ENCODE measurements at regions of chr1 and their contacts with region 1.

Region 1: DNA sequence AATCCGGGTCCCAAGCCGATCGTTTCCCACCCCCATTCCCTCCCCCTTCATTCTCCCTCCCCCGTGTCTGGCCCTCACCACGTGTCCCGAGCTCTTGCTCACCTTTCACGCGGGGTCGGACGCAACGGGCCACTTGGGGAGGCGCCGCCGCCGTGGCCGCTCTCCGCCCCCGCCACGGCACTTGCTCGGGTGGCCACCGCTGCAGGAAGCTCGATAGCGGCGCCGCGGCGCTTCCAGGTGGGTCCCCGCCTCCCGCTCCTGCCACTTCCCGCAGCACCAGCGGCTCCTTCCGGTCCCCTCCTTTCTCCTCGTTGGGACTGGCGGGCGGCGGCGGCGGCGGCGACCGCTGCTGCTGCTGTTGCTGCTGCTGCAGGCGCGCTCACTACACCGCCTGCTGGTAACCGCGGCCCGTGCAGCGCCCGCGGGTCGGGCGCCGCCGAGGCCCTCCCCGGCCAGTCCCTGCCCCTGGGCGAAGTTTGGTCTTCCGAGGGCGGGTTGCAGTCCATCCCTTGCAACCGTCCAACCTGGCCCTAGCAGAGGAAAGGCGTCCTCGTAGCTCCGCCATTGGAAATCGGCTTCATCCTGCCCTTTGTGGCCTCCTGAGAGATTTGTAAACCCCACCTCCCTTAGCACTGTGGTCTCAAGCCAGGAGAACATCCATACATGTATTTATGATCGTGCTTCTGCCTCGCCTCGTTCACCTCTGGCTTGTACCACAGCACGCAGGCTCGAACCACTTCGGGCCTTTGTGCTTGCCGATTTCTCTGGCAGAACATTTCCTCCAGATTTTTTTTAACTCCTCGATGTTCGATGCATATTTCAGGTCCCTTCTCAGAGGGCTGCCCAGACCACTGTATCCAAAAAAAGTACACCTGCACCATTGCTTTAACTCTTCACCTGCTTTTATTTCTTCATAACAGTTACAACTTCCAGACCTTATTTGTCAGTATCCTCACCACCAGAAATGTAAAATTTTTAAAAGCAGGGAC is 996 bp upstream of the ZZZ3 start:
- DNase-seq: peak; percentile 90
- H3K4me3 Mint-ChIP-seq: peak overlapping the region; percentile 85
- H3K27ac Mint-ChIP-seq: peak overlapping the region; percentile 91
- H3K4me1 Mint-ChIP-seq: peaks cover 24% of the 10 kb centered on the region
- H3K27me3 Mint-ChIP-seq: no peaks in the 10 kb centered on the region

Region 2: DNA sequence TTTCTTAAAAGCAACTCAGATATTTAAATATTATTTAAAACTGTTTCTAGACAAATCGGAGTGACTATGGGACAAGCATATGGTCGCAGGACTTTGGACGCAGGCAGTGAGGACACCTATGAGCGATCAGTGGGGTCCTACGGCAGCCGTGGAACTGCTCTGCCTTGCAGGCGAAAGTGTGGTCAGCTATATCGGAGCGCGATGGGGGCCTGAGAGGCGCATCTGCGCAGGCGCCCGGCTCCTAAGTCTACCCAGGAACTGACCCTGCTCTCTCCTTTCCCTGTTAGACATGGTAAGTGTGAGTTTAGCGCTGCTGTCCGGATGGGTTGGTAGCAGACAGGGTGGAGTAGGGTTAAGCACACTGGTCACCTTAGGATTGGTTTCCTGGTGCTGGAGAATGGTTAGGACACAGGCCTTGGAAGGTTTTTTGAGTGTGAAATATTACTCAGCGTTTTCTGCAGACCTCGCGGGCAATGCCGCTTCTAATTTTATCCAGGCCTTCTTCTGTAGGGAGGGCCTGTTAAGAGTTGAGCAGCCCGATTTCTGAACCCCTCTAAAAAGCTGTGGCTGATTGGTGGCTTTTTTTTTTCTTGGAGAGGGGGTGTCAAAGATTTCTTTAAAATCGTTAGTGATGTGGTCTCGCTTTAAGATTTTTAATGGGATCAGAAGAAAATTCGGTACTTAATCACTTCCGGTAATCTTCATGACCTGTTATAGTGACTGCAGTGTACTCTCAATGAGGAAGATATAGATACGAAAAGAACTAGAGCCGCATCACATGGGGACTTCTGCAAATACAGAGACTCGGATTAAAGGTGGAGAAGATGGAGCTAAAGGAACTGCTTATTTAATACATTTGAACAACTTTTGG is 1897.2 kb before region 1 on chr1 and contains the start of gene RABGGTB:
- intact Hi-C with region 1: loop called (anchors 2 kb)
- DNase-seq: peak; percentile 93
- H3K4me3 Mint-ChIP-seq: peak within 1 kb of the TSS; percentile 100
- H3K27ac Mint-ChIP-seq: peak within 1 kb of the TSS; percentile 97
- H3K4me1 Mint-ChIP-seq: peaks cover 37% of the 10 kb centered on the region
- H3K27me3 Mint-ChIP-seq: peaks cover 4% of the 10 kb centered on the region
- total RNA-seq, gene RABGGTB: 219 and 230 TPM in 2 replicates

Region 3: GRCh38 chr1:77639056-77639455 is 44.4 kb before region 1 on chr1:
- intact Hi-C with region 1: loop called (anchors 5 kb)
- DNase-seq: no peak
- H3K4me3 Mint-ChIP-seq: no peak overlapping the region
- H3K27ac Mint-ChIP-seq: peak overlapping the region; percentile 64
- H3K4me1 Mint-ChIP-seq: peaks cover 9% of the 10 kb centered on the region
- H3K27me3 Mint-ChIP-seq: no peaks in the 10 kb centered on the region

Region 4: GRCh38 chr1:77759071-77760028 is 75.9 kb after region 1 on chr1 and contains the start of gene USP33:
- intact Hi-C with region 1: loop called (anchors 1 kb)
- DNase-seq: peak; percentile 84
- H3K4me3 Mint-ChIP-seq: peak within 1 kb of the TSS; percentile 90
- H3K27ac Mint-ChIP-seq: peak within 1 kb of the TSS; percentile 87
- H3K4me1 Mint-ChIP-seq: peaks cover 34% of the 10 kb centered on the region
- H3K27me3 Mint-ChIP-seq: peaks cover 6% of the 10 kb centered on the region
- total RNA-seq, gene USP33: 38.4 and 39.8 TPM in 2 replicates

Region 5: DNA sequence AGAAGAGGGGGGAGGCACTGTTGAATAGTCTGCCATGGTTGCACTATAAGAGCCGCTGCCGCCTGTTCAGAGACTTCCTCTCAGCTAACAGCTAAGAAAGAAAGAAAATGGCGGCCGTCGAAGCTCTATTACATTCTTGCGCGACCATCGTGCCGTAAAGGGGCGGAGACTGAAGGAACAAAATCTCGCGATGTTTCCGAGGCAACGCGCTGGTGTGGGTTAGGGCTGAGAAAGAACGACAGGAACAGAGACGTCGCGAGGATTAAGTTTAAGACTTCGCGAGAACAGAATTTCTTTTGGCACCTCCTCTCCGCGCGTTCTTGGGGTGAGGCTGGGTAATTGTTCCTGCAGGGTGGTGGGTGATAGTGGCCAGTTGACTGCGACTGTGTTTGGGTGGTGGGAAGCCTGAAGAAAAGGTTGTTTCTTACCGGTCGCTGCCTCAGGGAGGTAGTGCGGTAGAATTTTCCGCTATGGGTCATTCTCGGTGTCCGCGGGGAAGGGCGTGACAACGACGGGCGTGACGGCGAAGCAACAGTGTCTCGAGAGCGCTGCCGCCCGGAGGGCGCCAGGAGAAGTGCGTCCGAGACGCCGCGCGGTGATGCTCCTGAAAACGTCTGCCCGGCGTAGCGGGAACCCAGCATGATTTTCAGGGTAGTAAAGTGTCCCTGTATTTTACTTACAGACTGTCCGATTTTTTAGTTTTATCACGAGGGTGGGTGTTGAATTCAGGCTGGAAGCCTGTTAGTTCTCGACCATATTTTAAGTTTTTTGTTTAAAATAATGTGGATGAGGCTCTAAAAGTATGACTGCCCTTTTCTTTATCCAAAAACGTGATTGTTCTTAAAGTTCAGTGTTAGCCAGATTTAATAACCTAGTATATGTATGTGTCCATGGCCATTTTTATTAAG is 295.8 kb after region 1 on chr1 and contains the start of gene FUBP1:
- intact Hi-C with region 1: loop called (anchors 1 kb)
- DNase-seq: peak; percentile 95
- H3K4me3 Mint-ChIP-seq: no peak within 1 kb of the TSS
- H3K27ac Mint-ChIP-seq: no peak within 1 kb of the TSS
- H3K4me1 Mint-ChIP-seq: peaks cover 43% of the 10 kb centered on the region
- H3K27me3 Mint-ChIP-seq: no peaks in the 10 kb centered on the region
- total RNA-seq, gene FUBP1: 262 and 269 TPM in 2 replicates

Region 6: DNA sequence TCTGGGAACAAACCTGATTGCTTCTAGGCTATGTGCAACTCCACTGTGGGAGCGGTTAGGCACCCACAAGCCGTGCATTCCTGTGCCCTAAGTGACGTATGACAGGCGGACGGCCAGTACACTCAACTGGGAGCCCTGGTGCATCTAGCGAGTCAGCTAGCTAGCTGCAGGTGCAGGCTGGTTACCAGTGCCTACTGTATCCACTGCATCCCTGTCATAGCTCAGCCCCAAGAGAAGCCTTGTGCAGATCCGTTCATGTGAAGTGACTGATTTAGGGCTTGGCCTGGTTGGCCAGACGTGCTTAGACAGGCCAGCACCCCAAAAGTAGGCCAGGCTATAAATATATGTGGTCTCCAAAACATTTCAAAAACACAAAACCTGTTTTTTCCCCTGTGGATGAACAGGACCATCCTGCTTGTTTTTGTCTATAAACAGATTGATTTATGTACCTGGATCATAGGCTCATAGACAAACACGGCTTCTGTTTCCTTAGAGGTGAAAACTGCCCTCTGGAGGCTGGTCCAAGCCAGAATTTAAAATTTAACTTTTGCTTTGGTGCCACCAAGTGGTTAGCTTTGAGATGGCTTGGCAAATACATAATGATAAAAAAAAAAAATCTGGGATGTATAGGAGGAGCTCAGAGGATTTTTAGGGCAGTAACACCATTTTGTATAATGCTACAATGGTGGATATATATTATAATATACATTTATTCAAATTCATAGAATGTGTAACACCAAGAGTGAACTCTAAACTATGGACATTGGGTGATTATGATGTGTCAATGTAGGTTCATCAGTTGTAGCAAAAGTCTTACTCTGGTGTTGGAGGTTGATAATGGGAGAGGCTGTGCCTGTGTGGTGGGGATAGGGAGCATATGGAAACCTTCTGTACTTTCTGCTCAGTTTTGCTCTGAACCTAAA is 430.8 kb after region 1 on chr1:
- intact Hi-C with region 1: loop called (anchors 5 kb)
- DNase-seq: peak; percentile 41
- H3K4me3 Mint-ChIP-seq: no peak overlapping the region
- H3K27ac Mint-ChIP-seq: no peak overlapping the region
- H3K4me1 Mint-ChIP-seq: peaks cover 5% of the 10 kb centered on the region
- H3K27me3 Mint-ChIP-seq: peaks cover 2% of the 10 kb centered on the region

Measured in activated T-helper 2 cell treated with anti-CD3 and anti-CD28 coated beads, Interferon-gamma antibody, Interleukin-2, Interleukin-4, amounts not matched to agents 10 μg/mL and 5 μg/mL and 100 μg/mL, durations not matched to agents 14 hours and 24 hours and 36 hours (primary cell).